ENCODE measurements at regions of chr2 and their contacts with region 1.

Region 1: DNA sequence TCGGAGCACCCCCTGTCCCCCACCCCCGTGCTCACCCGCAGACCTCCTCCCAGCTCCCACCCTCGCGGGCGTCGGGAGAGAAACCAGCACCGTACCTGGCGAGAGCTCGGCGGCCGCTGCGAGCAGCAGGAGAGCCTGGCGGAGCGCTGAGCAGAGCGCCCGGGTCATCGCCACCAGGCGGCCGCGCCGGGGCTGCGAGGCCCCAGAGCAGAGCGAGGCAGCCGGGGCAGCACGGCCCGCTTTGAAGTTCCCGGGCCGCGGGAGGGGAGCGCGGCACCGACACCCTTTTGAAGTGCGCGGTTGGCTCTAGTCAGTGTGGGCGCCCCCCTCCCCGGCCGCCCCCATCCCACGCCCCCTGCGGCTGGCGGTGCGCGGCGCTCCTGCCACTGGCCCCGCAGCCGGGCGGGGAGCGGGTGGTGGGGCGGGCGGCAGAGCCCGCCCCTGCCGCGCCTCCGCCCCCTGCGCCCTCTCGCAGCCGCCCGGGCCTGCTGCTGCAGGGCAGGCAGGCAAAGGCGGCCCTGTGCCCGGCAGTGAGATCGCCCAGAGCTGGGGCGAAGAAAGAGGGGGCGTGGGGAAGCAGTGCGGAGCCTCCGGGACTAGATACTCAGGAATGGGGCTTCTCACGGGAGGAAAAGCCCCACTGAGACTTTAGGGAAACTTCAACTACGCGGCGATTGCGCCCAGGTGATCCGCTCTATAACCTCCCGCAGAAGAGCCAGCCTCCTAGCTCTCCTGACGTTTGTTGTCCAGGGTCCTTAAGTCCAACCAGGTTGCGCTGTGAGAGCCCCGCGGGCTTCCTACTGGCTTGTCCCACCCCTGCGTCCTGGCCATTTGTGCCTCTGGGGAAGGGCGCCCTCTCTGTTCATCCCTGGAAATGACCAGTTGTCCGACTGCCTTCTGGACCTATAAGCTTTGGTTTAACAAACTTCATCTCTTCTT is at the start of gene ACVR1C:
- DNase-seq: peak; percentile 92
- H3K4me3 ChIP-seq: peak within 1 kb of the TSS; percentile 58 to 63
- H3K27ac ChIP-seq: no peak within 1 kb of the TSS
- H3K4me1 ChIP-seq: peaks cover 0 to 10% of the 10 kb centered on the region in 2 experiments; a peak in 1 of 4 replicates
- H3K27me3 ChIP-seq: peaks cover 16% of the 10 kb centered on the region
- CTCF ChIP-seq: peak; percentile 72
- EP300 ChIP-seq: no peak
- RAD21 ChIP-seq: no peak
- polyA plus RNA-seq, gene ACVR1C: 0.03 TPM in 1 of 2 replicates, not detected in the other

Region 2: DNA sequence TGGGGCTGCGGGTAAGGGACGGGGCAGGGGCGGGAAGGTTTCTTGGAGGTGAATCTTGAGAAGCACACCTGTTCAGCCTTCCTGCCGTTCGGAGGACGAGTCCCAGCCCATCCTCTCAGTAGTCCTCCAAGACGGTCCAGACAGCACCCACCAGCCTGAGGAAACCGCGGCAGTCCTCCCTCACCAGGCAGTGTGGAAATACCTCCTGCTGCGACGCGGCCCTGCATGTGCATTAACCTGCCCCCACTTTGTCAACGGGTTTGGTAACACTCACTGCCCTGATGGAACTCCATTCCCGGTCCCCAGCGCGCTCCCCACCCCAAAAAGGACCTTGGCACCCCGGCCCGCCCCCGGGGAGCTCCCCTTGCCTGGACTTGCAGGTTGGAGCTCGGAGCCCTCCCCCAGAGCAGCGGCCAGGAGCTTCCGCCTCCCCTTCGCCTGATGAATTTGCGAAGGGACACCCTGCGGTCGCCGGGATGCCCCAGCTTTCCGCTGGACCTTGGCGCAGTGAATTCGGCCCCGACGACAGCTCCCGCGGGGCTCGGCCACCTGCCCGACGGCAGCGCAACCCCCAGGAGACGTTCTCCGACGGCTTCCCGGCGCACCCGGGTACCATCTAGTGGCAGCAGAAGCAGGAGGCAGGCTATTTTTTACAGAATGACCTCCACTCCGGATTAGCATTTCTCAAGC is 31.6 kb before region 1 on chr2:
- CTCF ChIA-PET with region 1: interaction called, 10 read pairs
- POLR2A ChIA-PET with region 1: no interaction called
- DNase-seq: peak; percentile 57
- H3K4me3 ChIP-seq: peak overlapping the region in 1 of 2 experiments; percentile 16; a peak in 1 of 4 replicates
- H3K27ac ChIP-seq: no peak overlapping the region
- H3K4me1 ChIP-seq: no peaks in the 10 kb centered on the region
- H3K27me3 ChIP-seq: no peaks in the 10 kb centered on the region; the same call in 1 of the 2 replicates
- CTCF ChIP-seq: peak; percentile 44
- EP300 ChIP-seq: no peak
- RAD21 ChIP-seq: peak; percentile 31

Region 3: GRCh38 chr2:157611110-157611509 is 17.6 kb before region 1 on chr2:
- CTCF ChIA-PET with region 1: interaction called, 34 read pairs
- POLR2A ChIA-PET with region 1: no interaction called
- DNase-seq: no peak
- H3K4me3 ChIP-seq: no peak overlapping the region
- H3K27ac ChIP-seq: no peak overlapping the region
- H3K4me1 ChIP-seq: no peaks in the 10 kb centered on the region
- H3K27me3 ChIP-seq: no peaks in the 10 kb centered on the region
- CTCF ChIP-seq: no peak
- EP300 ChIP-seq: no peak
- RAD21 ChIP-seq: no peak

Region 4: GRCh38 chr2:157644776-157645175 is 16.0 kb after region 1 on chr2:
- CTCF ChIA-PET with region 1: interaction called, 19 read pairs
- POLR2A ChIA-PET with region 1: no interaction called
- DNase-seq: no peak
- H3K4me3 ChIP-seq: no peak overlapping the region
- H3K27ac ChIP-seq: no peak overlapping the region
- H3K4me1 ChIP-seq: no peaks in the 10 kb centered on the region
- H3K27me3 ChIP-seq: no peaks in the 10 kb centered on the region
- CTCF ChIP-seq: no peak
- EP300 ChIP-seq: no peak
- RAD21 ChIP-seq: no peak

Region 5: GRCh38 chr2:157657101-157657500 is 28.4 kb after region 1 on chr2:
- CTCF ChIA-PET with region 1: interaction called, 10 read pairs
- POLR2A ChIA-PET with region 1: no interaction called
- DNase-seq: no peak
- H3K4me3 ChIP-seq: no peak overlapping the region
- H3K27ac ChIP-seq: no peak overlapping the region
- H3K4me1 ChIP-seq: no peaks in the 10 kb centered on the region
- H3K27me3 ChIP-seq: no peaks in the 10 kb centered on the region
- CTCF ChIP-seq: no peak
- EP300 ChIP-seq: no peak
- RAD21 ChIP-seq: no peak

Measured in SK-N-SH (cell line).